Activated CD4-positive, alpha-beta T cell treated with anti-CD3 and anti-CD28 coated beads for 36 hours (primary cell): ENCODE measurements at regions of chr13 and their contacts with region 1.

Region 1: GRCh38 chr13:79585033-79585432 is 104.1 kb downstream of the NDFIP2 start:
- DNase-seq: no peak
- ATAC-seq: no peak
- H3K4me3 Mint-ChIP-seq: no peak overlapping the region
- H3K27ac Mint-ChIP-seq: no peak overlapping the region
- H3K4me1 Mint-ChIP-seq: no peaks in the 10 kb centered on the region
- H3K27me3 Mint-ChIP-seq: peaks cover 6% of the 10 kb centered on the region

Region 2: DNA sequence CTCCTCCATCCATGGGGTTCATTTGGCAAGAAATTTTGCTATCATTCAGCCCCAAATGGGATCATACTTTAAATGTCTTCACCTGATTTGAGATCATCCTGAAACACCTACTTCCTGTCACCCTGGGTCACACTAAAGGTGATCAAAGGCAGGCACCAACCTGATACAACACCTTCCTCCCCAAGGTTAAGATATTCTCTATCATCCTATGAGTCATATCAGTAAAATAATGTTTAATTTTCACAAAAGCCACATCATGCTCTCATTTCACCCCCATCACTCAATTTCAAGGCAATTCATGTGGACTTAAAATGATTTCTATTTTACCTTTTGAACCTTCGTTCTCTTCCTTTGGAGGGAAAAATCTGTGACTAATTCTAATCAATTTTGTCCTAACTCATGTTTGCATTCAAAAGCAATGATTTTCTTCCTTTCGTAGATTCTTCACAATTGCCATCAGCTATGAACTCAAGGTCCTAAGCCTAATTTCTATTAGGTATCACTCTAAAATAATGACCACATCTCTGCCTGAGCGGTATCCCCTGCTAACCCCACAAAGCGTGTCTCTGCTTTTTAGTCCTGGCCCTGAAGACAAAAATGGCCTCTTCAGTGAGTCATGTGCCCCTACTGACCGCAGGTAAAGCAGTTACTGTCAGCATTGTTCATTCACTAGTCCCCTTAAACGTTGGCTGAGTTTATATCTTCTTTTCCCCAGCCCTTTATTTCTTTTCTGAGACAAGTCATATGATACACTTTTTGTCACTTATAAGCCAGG is 616.8 kb after region 1 on chr13:
- CTCF ChIA-PET with region 1: no interaction called
- POLR2A ChIA-PET with region 1: interaction called, 10 read pairs
- intact Hi-C with region 1: no loop called
- DNase-seq: no peak
- ATAC-seq: no peak
- H3K4me3 Mint-ChIP-seq: no peak overlapping the region
- H3K27ac Mint-ChIP-seq: no peak overlapping the region
- H3K4me1 Mint-ChIP-seq: no peaks in the 10 kb centered on the region
- H3K27me3 Mint-ChIP-seq: no peaks in the 10 kb centered on the region